Calu3 (cell line): ENCODE measurements at regions of chr16 and their contacts with region 1.

Region 1: DNA sequence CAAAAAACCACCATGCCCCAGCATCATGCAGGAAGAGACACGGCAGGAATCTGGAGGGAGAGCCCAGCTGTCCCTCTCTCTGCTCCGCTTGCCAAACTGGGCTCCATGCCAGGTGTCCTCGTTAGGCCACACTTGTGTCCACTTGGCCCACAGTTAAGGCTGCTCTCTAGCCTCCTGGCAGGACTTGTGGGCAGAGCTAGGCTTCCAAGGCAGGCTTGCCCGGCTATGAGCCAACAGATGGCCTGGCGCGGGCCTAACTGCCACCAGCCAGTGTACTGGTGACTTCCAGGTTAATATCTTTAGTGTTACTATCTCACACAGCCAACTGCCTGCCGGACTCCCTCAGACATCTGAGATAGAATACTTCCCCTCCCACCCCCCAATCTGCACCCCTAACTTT is 10.6 kb downstream of the ATP6V0D1 start:
- DNase-seq: no peak
- H3K4me3 Mint-ChIP-seq: no peak overlapping the region
- H3K27ac Mint-ChIP-seq: no peak overlapping the region
- H3K4me1 Mint-ChIP-seq: peaks cover 6% of the 10 kb centered on the region
- H3K27me3 Mint-ChIP-seq: no peaks in the 10 kb centered on the region
- CTCF ChIP-seq: no peak

Region 2: DNA sequence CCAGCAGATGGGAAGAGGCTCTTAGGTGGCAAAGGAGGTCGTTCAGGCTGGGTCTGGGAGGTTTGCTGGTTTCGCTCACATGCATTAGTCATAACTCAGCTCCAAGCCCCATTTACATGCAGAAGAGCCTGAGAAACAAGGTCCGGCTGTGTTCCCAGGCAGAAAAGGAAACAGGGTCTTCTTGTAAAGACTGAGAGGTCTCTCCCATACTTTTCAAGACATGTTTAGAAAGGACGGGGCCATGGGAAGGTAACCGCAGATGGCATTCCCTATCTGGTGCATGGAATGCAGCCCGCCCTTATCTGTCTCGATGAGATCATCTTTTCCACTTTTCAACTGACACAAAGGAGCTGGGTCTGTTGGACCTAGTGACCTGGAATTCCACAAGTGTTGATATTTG is 1959.5 kb before region 1 on chr16:
- CTCF ChIA-PET with region 1: no interaction called
- intact Hi-C with region 1: no loop called
- DNase-seq: no peak
- H3K4me3 Mint-ChIP-seq: no peak overlapping the region
- H3K27ac Mint-ChIP-seq: no peak overlapping the region
- H3K4me1 Mint-ChIP-seq: no peaks in the 10 kb centered on the region
- H3K27me3 Mint-ChIP-seq: no peaks in the 10 kb centered on the region
- CTCF ChIP-seq: no peak

Region 3: GRCh38 chr16:67480833-67481560 is 10.6 kb after region 1 on chr16 and contains the start of gene ATP6V0D1:
- CTCF ChIA-PET with region 1: interaction called, 12 read pairs
- intact Hi-C with region 1: no loop called
- DNase-seq: peak; percentile 100
- H3K4me3 Mint-ChIP-seq: peak within 1 kb of the TSS; percentile 100
- H3K27ac Mint-ChIP-seq: peak within 1 kb of the TSS; percentile 99
- H3K4me1 Mint-ChIP-seq: peaks cover 10% of the 10 kb centered on the region
- H3K27me3 Mint-ChIP-seq: no peaks in the 10 kb centered on the region
- CTCF ChIP-seq: peak; percentile 82
- total RNA-seq, gene ATP6V0D1: 85.3 and 91.0 TPM in 2 replicates